Left cardiac atrium (tissue), 4 donors: ENCODE measurements at regions of chr10 and their contacts with region 1.

Region 1: DNA sequence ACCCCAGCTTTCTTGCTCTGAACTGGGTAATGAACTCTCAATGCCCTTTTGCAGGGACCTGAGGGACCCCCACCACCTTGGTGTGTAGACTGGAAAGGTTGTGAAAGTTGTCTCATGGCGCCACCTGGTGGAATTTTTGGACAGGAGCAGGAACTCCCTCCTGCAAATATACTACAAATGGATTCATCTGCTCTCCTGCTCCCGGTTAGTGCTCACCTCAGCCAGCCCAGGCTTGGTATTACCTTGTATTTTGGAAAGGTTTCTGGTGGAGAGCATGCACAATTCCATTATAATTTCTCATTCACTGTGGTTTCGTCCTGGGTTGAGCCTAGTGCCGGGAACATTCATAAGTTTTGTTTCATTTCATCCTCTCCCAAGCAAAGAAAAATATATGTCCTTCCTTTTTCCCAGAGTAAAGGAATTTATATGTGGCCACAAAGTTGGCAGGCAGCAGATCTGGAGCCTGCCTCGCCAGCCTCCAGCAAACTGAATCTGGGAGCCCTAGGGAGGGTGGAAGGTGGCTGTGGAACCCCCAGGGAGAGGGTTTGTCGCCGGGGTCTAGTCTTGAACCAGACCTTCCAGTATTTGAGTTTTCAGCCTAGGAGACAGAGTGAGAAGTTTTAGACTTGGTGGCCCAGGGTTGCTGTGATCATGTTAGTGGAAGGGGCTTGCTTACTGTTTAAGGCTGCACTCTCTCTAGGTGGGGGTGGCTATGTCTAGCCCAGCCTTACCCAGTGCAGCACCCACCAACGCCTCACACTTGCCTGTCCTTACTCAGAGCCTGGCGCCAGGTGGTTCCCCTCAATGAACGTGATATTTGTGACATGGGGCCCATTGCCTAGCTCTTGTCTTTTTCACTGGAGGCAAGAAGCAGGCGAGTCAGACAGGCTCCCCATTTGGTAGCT is 9.5 kb downstream of the FAM241B start:
- DNase-seq: peak; percentile 54
- ATAC-seq: peak in 1 of 2 donors; percentile 61

Region 2: DNA sequence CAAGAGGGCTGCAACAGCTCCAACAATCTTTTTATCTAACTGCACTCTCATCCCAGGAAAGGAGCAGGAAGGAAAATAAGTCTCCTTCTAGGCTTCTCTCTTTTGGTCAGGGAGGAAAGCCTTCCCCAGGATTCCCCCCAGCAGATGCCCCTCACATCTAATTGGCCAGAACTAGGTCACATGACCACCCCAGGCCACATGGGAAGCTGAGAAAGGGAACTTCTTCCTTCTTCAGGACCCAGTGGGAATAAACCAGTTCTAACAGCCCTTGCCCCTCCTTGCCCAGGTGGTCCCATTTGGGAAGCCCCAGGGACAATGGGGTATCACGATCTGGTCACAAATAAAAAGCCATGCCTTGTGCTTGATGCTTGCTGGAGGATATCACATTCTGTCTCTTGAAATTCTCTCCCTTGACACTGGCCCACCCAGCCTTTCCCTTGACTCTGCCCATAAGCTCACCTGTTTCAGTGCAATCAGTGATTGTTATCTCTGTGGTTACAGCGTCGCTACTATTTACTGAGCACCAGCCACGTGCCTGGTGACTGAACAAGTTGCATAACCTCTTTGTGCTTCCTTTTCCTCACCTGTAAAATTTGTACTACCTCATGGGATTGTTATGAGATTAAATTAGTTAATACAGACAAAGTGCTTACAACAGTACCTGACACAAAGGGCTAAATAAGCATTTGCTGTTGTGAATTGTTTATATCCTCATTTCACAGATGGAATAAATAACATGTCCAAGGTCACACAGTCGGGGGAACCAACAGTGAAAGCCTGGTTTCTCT is 213.8 kb before region 1 on chr10:
- intact Hi-C with region 1: loop called (anchors 2 to 10 kb)
- DNase-seq: no peak
- ATAC-seq: no peak

Region 3: DNA sequence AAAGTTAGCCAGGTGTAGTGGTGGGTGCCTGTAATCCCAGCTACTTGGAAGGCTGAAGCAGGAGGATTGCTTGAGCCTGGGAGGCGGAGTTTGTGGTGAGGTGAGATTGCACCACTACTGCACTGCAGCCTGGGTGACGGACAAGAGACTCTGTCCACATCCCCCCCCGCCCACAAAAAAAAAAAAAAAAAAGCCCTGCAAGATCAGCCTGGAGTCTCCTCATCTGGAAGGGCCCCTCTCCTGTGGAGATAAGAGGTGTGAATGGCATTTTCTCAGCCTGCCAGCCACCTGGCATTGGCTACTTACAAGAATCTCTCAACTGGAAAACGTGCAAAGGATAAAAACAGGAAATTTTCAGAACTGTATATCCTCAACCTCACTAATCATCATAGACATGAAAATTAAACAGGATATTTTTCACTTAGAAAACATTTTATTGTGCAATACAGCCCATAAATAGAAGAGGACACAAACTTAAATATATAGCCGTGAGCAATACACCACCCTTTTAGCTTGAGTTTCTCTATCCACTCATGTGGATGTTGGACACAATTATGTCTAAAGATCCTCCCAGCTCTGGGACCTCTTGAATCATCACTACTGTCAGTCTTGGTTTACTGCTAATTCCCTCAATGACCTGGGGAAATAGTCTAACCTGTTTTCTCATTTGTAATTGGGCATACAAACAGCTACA is 199.6 kb before region 1 on chr10:
- intact Hi-C with region 1: loop called in 1 of 2 experiments (anchors 10 kb)
- DNase-seq: no peak
- ATAC-seq: peak in 1 of 2 donors; percentile 67

Region 4: DNA sequence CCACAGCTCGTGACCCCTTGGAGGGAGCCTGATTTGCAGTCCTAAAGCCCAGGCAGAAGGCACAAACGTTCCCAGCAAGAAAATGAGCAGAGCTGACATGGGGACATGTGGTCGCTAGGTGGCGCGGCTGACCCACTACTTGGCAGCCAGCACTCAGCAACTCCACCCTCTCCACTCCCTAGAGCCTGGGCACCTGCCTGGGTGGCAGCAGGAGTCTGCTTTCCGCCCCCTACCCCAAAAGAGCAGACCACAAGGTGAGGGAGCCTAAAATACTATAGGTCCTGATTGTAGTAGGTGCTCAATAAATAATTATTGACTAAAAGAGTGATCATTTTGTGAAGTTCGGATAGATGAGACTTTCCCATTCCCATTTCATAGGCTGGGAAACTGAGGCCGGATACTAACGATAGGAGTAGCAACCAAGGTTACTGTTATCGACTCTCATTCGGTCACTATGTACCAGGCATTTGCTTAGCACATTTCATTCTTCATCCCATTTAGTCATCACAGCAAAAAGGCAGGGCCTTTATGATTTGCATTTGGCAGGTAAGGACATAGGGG is 123.8 kb before region 1 on chr10:
- intact Hi-C with region 1: loop called (anchors 1 to 5 kb)
- DNase-seq: peak; percentile 74
- ATAC-seq: peak; percentile 85 to 90

Region 5: DNA sequence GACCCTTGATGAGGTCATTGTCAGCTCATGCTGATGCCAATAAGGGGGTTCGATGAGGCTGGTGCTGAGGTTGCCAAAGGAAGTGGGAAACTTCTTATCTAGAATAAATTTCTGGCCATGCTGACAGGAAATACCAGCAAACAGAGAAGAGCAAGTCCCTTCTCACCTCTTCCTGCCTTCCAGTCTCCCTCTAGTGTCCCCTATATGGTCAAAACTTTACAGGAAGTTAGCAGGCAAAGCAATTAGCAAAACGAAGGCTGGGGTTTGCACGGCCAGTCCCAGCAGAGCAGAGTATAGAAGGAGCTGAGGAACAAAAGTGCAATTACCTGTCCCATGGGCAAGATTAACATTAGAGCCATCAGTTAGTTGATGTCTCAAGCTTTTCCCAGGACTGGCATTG is 51.2 kb before region 1 on chr10:
- intact Hi-C with region 1: no loop called
- DNase-seq: no peak
- ATAC-seq: no peak

Region 6: GRCh38 chr10:70832852-70833528 is 1193.4 kb after region 1 on chr10:
- intact Hi-C with region 1: no loop called
- DNase-seq: no peak
- ATAC-seq: peak in 1 of 2 donors; percentile 80